ENCODE measurements at regions of chr1 and their contacts with region 1.

Region 1: GRCh38 chr1:186363891-186364290 is 11.2 kb downstream of the TPR start:
- DNase-seq: no peak
- ATAC-seq: no peak
- H3K4me3 Mint-ChIP-seq: no peak overlapping the region
- H3K27ac Mint-ChIP-seq: no peak overlapping the region
- H3K4me1 Mint-ChIP-seq: no peaks in the 10 kb centered on the region
- H3K27me3 Mint-ChIP-seq: no peaks in the 10 kb centered on the region
- CTCF ChIP-seq: no peak

Region 2: DNA sequence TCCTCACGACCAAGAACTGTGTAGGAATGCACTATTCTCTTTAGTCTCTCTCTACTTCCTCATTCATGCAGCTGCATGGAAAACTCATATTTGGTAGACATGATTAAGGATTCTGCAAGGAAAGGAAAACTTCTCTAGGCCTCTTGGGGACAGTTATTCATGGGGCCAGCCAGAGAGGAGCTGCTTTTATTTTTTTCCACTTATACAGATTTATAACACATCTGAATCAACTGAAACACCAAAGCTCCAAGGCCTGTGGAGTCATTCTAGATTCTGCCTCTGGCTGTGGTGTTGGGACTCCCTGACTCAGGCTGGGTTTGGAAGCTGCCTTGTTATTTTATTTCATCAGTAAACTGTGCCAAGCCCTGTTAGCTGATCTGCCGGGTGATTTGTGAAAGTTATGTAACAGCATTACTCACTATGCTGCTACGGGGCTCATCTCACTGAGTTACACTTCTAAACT is 1525.4 kb before region 1 on chr1:
- CTCF ChIA-PET with region 1: no interaction called
- POLR2A ChIA-PET with region 1: interaction called, 10 read pairs
- intact Hi-C with region 1: no loop called
- DNase-seq: no peak
- ATAC-seq: no peak
- H3K4me3 Mint-ChIP-seq: no peak overlapping the region
- H3K27ac Mint-ChIP-seq: no peak overlapping the region
- H3K4me1 Mint-ChIP-seq: peaks cover 11% of the 10 kb centered on the region
- H3K27me3 Mint-ChIP-seq: no peaks in the 10 kb centered on the region
- CTCF ChIP-seq: no peak

Region 3: DNA sequence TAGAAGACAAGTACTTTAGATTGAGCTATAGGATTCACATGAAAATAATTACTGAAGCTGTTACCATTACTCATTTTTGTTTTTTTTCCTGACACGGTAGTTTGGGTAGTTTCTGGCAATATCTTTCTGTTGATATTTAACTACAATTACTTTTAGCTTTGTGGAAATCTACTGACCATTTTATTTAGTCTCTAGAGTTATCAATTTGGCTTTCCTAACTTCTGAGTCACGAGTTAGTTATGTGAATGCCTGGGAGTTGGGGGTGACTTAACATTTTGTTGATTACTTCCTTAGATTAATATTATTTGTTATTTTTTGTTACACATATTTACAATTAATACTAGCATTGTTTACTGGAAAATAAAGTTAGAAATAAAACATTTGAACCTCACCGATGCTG is 469.1 kb before region 1 on chr1:
- CTCF ChIA-PET with region 1: no interaction called
- POLR2A ChIA-PET with region 1: no interaction called
- intact Hi-C with region 1: no loop called
- DNase-seq: no peak
- ATAC-seq: no peak
- H3K4me3 Mint-ChIP-seq: no peak overlapping the region
- H3K27ac Mint-ChIP-seq: no peak overlapping the region
- H3K4me1 Mint-ChIP-seq: no peaks in the 10 kb centered on the region
- H3K27me3 Mint-ChIP-seq: no peaks in the 10 kb centered on the region
- CTCF ChIP-seq: no peak

Region 4: DNA sequence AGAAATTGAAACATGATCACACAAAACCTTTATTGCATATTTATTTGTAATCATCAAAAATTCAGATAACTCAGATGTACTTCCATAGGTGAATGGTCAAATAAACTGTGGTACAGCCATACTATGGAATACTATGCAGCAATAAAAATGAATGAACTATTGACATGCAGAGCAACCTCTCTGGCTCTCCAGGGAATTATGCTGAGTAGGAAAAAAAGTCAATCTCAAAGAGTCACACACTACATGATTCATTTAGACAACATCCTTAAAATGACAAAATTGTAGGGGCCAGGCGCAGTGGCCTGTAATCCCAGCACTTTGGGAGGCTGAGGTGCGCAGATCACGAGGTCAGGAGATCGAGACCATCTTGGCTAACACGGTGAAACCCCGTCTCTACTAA is 92.9 kb before region 1 on chr1:
- CTCF ChIA-PET with region 1: no interaction called
- POLR2A ChIA-PET with region 1: no interaction called
- intact Hi-C with region 1: no loop called
- DNase-seq: no peak
- ATAC-seq: no peak
- H3K4me3 Mint-ChIP-seq: no peak overlapping the region
- H3K27ac Mint-ChIP-seq: no peak overlapping the region
- H3K4me1 Mint-ChIP-seq: no peaks in the 10 kb centered on the region
- H3K27me3 Mint-ChIP-seq: peaks cover 3% of the 10 kb centered on the region
- CTCF ChIP-seq: no peak